PC-3 (cell line): ENCODE measurements at regions of chr9 and their contacts with region 1.

Region 1: GRCh38 chr9:88722753-88723152 is 187.8 kb downstream of the NXNL2 start:
- DNase-seq: peak; percentile 47
- ATAC-seq: peak; percentile 50; the same call in 1 of the 2 replicates
- H3K4me3 ChIP-seq: no peak overlapping the region
- H3K27ac ChIP-seq: no peak overlapping the region
- H3K4me1 ChIP-seq: peaks cover 16% of the 10 kb centered on the region
- H3K27me3 ChIP-seq: no peaks in the 10 kb centered on the region
- CTCF ChIP-seq: peak; percentile 61

Region 2: DNA sequence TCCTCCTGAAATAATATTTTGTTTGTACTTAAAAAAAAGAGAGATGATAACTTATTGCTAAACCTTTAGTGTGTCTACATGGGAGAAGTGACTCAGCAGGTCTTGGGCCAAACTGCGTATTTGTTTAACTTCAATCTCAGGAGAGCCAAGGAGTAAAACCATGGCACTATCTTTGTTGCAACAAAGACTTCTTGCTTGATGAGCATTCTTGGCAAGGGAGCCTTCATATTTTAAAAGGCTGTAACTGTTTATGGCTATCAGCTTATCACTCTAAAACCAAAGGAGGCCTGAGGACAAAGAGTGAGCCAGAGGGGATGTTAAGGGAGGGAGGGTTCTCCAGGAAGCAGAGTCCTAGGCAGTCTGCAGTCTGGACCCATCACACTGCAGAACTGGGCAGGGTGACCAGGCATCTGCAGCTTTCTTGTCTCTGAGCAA is 52.3 kb after region 1 on chr9:
- CTCF ChIA-PET with region 1: no interaction called
- POLR2A ChIA-PET with region 1: no interaction called
- intact Hi-C with region 1: loop called (anchors 2 kb)
- DNase-seq: peak; percentile 88
- ATAC-seq: peak; percentile 43
- H3K4me3 ChIP-seq: peak overlapping the region; percentile 29; the same call in 1 of the 2 replicates
- H3K27ac ChIP-seq: peak overlapping the region; percentile 100
- H3K4me1 ChIP-seq: peaks cover 63% of the 10 kb centered on the region
- H3K27me3 ChIP-seq: no peaks in the 10 kb centered on the region
- CTCF ChIP-seq: no peak

Region 3: DNA sequence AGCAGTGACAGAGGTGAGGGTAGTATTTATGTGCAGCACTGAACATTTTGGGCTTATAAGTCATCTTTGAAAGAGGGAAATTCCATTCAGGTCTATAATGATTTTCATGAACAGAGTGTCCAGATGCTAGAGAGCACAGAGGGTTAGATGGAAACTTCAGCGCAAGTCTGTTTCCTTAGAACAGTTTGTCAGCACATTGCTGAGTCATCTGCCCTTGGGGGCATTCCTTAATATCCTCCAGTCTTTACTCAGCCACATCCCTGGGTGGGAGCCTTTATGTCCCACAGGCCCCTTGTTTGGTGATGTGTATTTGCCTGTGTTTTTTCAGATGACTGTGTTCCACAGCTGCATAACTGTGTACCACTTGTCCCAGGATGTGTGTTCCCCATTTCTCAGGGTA is 130.0 kb after region 1 on chr9:
- CTCF ChIA-PET with region 1: no interaction called
- POLR2A ChIA-PET with region 1: no interaction called
- intact Hi-C with region 1: loop called (anchors 10 kb)
- DNase-seq: peak; percentile 85
- ATAC-seq: peak; percentile 90
- H3K4me3 ChIP-seq: no peak overlapping the region
- H3K27ac ChIP-seq: no peak overlapping the region
- H3K4me1 ChIP-seq: peaks cover 12% of the 10 kb centered on the region; the same call in 1 of the 2 replicates
- H3K27me3 ChIP-seq: no peaks in the 10 kb centered on the region
- CTCF ChIP-seq: no peak

Region 4: GRCh38 chr9:89000973-89001916 is 278.5 kb after region 1 on chr9:
- CTCF ChIA-PET with region 1: no interaction called
- POLR2A ChIA-PET with region 1: no interaction called
- intact Hi-C with region 1: loop called (anchors 5 kb)
- DNase-seq: peak; percentile 79
- ATAC-seq: peak; percentile 76
- H3K4me3 ChIP-seq: peak overlapping the region; percentile 49; the same call in 1 of the 2 replicates
- H3K27ac ChIP-seq: no peak overlapping the region
- H3K4me1 ChIP-seq: no peaks in the 10 kb centered on the region
- H3K27me3 ChIP-seq: no peaks in the 10 kb centered on the region
- CTCF ChIP-seq: peak; percentile 75